ENCODE measurements at regions of chr17 and their contacts with region 1.

Region 1: DNA sequence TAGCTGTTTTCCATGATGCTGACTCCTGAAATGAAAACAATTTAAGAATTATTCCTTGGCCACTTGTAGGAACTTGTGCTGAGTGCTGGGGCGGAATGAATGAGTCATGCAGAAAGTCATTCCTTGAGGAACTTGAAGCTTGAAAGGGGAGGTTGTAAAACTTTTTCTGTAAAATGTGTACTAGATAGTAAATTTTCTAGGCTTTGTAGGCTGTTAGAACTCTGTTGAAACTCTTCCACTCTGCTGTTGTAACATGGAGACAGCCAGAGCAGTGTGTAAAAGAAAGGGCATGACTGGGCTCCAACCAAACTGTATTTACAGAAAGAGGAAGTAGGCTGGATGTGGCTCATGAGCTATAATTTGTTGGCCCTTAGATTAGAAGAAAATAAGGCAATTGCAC is 46.1 kb downstream of the ABCA8 start:
- DNase-seq: peak; percentile 93
- H3K4me3 ChIP-seq: no peak overlapping the region
- H3K27ac ChIP-seq: peak overlapping the region; percentile 66
- H3K4me1 ChIP-seq: peaks cover 13% of the 10 kb centered on the region
- H3K27me3 ChIP-seq: no peaks in the 10 kb centered on the region
- CTCF ChIP-seq: no peak
- POLR2A ChIP-seq: no peak

Region 2: GRCh38 chr17:68398691-68399637 is 510.1 kb before region 1 on chr17:
- CTCF ChIA-PET with region 1: no interaction called
- POLR2A ChIA-PET with region 1: no interaction called
- dilution Hi-C with region 1: no loop called
- intact Hi-C with region 1: no loop called
- DNase-seq: peak; percentile 76
- H3K4me3 ChIP-seq: no peak overlapping the region
- H3K27ac ChIP-seq: no peak overlapping the region
- H3K4me1 ChIP-seq: peaks cover 11% of the 10 kb centered on the region
- H3K27me3 ChIP-seq: no peaks in the 10 kb centered on the region
- CTCF ChIP-seq: peak; percentile 90 to 91
- POLR2A ChIP-seq: no peak

Region 3: GRCh38 chr17:68777243-68777855 is 131.7 kb before region 1 on chr17:
- CTCF ChIA-PET with region 1: interaction called, 20 read pairs
- POLR2A ChIA-PET with region 1: no interaction called
- dilution Hi-C with region 1: no loop called
- intact Hi-C with region 1: loop called (anchors 1 kb)
- DNase-seq: peak; percentile 90
- H3K4me3 ChIP-seq: no peak overlapping the region
- H3K27ac ChIP-seq: peak overlapping the region; percentile 44
- H3K4me1 ChIP-seq: peaks cover 36% of the 10 kb centered on the region
- H3K27me3 ChIP-seq: no peaks in the 10 kb centered on the region
- CTCF ChIP-seq: peak; percentile 63
- POLR2A ChIP-seq: no peak

Region 4: DNA sequence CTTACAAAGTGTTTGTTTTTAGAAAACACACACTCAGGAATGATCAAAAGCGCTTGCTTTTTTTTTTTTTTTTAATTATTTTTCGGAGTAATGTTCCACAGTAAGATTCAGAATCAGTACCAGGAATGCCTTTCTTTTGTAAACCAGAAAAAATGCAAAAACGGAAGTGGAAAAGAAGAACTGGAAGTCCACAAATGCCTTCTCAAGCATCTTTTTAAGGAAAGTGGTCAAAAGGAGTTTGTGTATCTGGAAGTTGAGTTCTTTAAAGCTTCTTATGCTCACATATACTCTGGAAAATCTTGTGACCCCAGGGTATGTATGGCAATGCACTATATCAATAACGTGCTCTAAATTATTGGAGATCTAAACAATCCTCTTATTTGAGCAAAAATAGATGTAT is 79.9 kb before region 1 on chr17:
- CTCF ChIA-PET with region 1: no interaction called
- POLR2A ChIA-PET with region 1: no interaction called
- dilution Hi-C with region 1: no loop called
- intact Hi-C with region 1: no loop called
- DNase-seq: no peak
- H3K4me3 ChIP-seq: no peak overlapping the region
- H3K27ac ChIP-seq: no peak overlapping the region
- H3K4me1 ChIP-seq: no peaks in the 10 kb centered on the region
- H3K27me3 ChIP-seq: no peaks in the 10 kb centered on the region
- CTCF ChIP-seq: no peak
- POLR2A ChIP-seq: no peak

Region 5: DNA sequence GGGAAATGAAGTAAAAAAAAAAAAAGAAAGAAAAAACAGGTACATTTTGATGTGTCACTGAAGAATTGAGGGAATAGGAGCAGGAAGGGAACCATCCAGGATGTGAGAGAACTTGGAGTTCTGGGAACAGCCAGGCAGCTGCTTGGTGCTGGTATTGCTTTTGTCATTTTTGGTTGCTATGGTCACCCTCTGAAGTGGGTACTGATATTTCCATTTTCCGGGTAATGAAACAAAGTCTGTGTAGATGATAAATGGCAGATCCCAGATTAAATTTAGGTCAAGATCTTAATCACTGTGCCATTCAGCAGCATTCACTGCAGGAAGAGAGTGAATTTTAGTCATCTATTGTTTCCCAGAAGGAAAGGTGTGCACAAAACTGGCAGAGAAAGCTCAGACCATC is 47.5 kb before region 1 on chr17:
- CTCF ChIA-PET with region 1: no interaction called
- POLR2A ChIA-PET with region 1: no interaction called
- dilution Hi-C with region 1: no loop called
- intact Hi-C with region 1: loop called (anchors 5 kb)
- DNase-seq: peak; percentile 67
- H3K4me3 ChIP-seq: no peak overlapping the region
- H3K27ac ChIP-seq: peak overlapping the region; percentile 45
- H3K4me1 ChIP-seq: peaks cover 10% of the 10 kb centered on the region
- H3K27me3 ChIP-seq: no peaks in the 10 kb centered on the region
- CTCF ChIP-seq: no peak
- POLR2A ChIP-seq: no peak

Region 6: GRCh38 chr17:69235338-69235930 is 326.4 kb after region 1 on chr17:
- CTCF ChIA-PET with region 1: no interaction called
- POLR2A ChIA-PET with region 1: no interaction called
- dilution Hi-C with region 1: no loop called
- intact Hi-C with region 1: loop called (anchors 2 kb)
- DNase-seq: peak; percentile 90
- H3K4me3 ChIP-seq: no peak overlapping the region
- H3K27ac ChIP-seq: peak overlapping the region; percentile 24
- H3K4me1 ChIP-seq: peaks cover 4% of the 10 kb centered on the region
- H3K27me3 ChIP-seq: no peaks in the 10 kb centered on the region
- CTCF ChIP-seq: peak; percentile 67 to 68
- POLR2A ChIP-seq: no peak

Measured in endothelial cell of umbilical vein (primary cell).